ENCODE measurements at regions of chr1 and their contacts with region 1.

Region 1: DNA sequence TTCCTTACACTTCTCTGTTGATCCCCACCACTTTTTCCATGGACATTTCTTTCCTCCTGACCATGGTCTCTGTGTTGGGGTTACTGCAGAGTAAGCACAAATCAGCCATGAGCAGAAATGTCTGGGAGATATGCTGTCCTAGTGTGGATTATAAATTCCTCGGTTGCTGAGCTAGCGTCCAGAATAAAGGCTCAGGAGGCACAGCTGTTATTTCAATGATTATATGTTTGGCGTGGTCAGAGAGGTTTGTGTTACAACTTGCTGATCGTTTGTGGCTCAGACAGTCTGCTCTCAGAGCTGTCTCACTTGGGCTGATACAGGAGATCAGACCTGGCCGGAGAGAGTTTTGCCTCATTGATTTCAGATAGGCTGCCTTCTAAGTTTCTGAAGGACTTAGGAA is 37.5 kb upstream of the LAMC2 start:
- DNase-seq: no peak
- ATAC-seq: peak; percentile 74

Region 2: GRCh38 chr1:183234660-183235476 is 86.3 kb after region 1 on chr1:
- intact Hi-C with region 1: loop called (anchors 10 kb)
- DNase-seq: peak; percentile 57
- ATAC-seq: peak; percentile 89